Aorta (tissue), 5 donors: ENCODE measurements at regions of chr9 and their contacts with region 1.

Region 1: GRCh38 chr9:123073991-123074422 is 40.5 kb downstream of the GPR21 start:
- DNase-seq: no peak
- ATAC-seq: peak; percentile 71
- H3K4me3 ChIP-seq: peak overlapping the region in 1 of 2 donors; percentile 18
- H3K27ac ChIP-seq: peak overlapping the region; percentile 64 to 82
- H3K4me1 ChIP-seq: peaks cover 6 to 14% of the 10 kb centered on the region in 2 donors
- H3K27me3 ChIP-seq: no peaks in the 10 kb centered on the region

Region 2: GRCh38 chr9:123034881-123035510 is 39.0 kb before region 1 on chr9:
- intact Hi-C with region 1: loop called (anchors 5 kb)
- DNase-seq: no peak
- ATAC-seq: peak; percentile 47
- H3K4me3 ChIP-seq: peak overlapping the region; percentile 53 to 63
- H3K27ac ChIP-seq: peak overlapping the region; percentile 66 to 73
- H3K4me1 ChIP-seq: peaks cover 0 to 8% of the 10 kb centered on the region in 2 donors
- H3K27me3 ChIP-seq: no peaks in the 10 kb centered on the region